HepG2 (cell line): ENCODE measurements at regions of chrX and their contacts with region 1.

Region 1: DNA sequence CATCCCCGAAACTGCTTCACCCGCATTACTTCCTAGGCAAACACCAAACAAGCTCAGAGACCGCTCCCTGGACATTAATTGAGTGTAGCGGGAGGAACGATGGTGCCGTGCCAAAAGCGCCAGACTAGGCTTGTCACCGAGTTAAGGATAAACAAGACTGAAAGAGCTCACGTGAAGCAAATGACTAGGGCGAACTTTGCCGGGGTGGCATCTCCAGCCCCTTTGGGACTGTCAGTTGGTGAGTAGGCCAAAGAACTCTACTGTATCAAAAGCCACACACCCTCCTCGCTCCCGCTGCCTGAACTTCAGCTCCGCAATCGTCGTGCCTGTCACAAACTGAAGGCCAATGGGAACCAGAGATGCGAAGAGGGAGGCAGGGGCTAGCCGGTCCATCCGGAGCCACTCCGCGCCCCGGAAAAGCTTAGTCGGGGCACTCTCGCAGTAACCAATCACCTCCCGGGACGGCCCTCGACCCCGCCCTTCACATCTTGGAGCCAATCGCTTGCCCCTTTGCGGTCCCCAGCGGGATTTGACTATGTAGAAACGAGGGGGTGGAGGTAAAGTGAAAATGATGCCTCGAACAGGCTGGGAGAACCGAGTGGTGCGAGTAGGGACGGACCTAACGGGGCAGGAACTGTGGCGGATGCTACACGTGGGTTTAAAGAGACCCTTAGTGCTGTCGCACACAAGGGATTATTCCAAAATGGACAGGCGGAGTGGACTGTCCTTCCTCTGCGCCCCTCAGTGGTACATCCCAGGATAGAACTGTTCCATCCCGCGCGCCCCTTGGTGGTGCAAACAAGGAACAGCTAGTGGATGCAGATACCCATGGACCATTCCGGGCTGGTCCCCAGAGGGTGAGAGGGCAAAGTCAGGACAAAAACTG is 37.1 kb upstream of the FAM156A start:
- DNase-seq: peak; percentile 90
- ATAC-seq: peak; percentile 98
- H3K4me3 ChIP-seq: peak overlapping the region; percentile 77 to 86 (median 79)
- H3K27ac ChIP-seq: peak overlapping the region; percentile 87
- H3K4me1 ChIP-seq: peaks cover 8% of the 10 kb centered on the region; the same call in 1 of the 2 replicates
- H3K27me3 ChIP-seq: peaks cover 1 to 4% of the 10 kb centered on the region in 2 experiments; a peak in 2 of 5 replicates
- CTCF ChIP-seq: peak; percentile 81
- EP300 ChIP-seq: no peak
- POLR2A ChIP-seq: peak in 1 of 2 experiments; percentile 50; a peak in 3 of 4 replicates
- RAD21 ChIP-seq: 0 out of 2 replicates have a peak, but pooled peaks have one; percentile 47

Region 2: DNA sequence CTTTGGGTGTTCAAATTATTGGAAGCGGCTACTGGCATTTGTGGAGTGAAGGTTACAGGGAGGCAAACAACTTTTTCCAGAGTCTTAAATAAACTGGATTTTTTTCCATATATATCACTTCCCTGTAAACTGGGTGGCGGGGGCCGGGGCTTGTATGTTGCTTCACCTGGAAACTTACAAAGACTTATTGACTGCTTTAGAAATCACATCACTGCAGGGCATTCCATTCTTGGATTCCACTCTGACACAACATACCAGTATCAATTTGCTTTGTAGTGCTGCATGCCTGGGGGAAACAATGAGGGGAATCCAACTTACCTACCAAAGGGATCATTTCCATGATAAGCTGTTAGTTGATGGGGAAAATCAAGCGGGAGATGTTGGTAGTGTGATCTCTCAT is 15.4 kb before region 1 on chrX:
- CTCF ChIA-PET with region 1: no interaction called
- POLR2A ChIA-PET with region 1: interaction called, 13 read pairs
- in situ Hi-C with region 1: no loop called
- intact Hi-C with region 1: no loop called
- DNase-seq: peak; percentile 88
- ATAC-seq: peak; percentile 87
- H3K4me3 ChIP-seq: peak overlapping the region in 1 of 3 experiments; percentile 10; a peak in 2 of 6 replicates
- H3K27ac ChIP-seq: peak overlapping the region; percentile 90
- H3K4me1 ChIP-seq: peaks cover 89% of the 10 kb centered on the region
- H3K27me3 ChIP-seq: no peaks in the 10 kb centered on the region
- CTCF ChIP-seq: no peak
- EP300 ChIP-seq: peak in 1 of 2 experiments; percentile 55; a peak in 1 of 4 replicates
- POLR2A ChIP-seq: no peak
- RAD21 ChIP-seq: no peak

Region 3: DNA sequence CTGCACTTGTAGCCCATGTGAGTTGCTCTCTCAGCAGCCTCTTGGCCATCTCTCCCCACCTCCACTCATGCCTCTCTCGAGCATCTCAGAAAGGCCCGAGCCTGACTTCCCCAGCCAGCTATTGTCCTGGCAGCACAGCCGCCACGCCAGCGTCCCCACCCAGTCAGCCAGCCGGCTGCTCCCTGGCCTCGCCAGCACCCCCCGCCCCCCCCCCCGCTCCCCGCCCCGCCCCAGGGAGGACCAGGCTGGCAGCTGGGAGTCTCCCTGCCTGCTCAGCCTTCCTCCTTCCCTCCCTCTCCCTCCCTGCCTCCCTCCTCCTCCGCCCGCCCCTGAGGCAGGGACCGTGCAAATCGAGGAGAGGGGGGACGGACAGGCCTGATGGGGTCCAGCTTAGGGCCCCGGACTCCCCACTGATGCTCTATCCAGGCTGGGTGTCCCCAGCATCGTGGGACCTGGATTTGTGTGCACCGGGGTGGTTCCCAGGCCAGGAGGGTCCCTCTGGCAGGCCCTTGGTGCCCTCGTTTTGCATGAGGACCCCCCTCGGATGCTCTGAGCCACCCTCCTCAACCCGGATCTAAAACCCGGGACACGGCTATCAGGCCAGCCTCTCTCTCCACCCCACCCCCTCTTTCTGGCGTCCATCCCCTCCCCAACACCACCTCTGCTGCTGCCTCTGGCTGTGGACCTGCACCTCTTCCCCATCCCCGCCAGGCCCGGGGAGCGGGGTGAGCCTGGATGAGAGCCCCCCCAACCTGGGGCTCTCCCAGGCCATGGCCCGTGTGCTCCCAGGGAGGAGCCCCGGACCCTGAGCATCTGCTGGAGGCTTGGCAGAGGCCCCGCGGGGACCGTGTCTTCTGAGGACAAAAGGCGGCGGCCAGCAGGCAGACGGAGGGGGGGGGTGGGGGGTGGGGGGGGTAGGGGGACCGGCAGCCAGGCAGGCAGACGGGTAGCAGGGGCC is 53.1 kb after region 1 on chrX and contains the start of gene GPR173:
- CTCF ChIA-PET with region 1: no interaction called
- POLR2A ChIA-PET with region 1: no interaction called
- in situ Hi-C with region 1: no loop called
- intact Hi-C with region 1: loop called (anchors 2 kb)
- DNase-seq: no peak
- ATAC-seq: no peak
- H3K4me3 ChIP-seq: peak within 1 kb of the TSS in 2 of 3 experiments; percentile 16 to 23; a peak in 2 of 6 replicates
- H3K27ac ChIP-seq: no peak within 1 kb of the TSS
- H3K4me1 ChIP-seq: no peaks in the 10 kb centered on the region
- H3K27me3 ChIP-seq: no peaks in the 10 kb centered on the region
- CTCF ChIP-seq: no peak
- EP300 ChIP-seq: no peak
- POLR2A ChIP-seq: no peak
- RAD21 ChIP-seq: no peak
- total RNA-seq, gene GPR173: not detected in 2 replicates